Heart left ventricle (tissue), 16 donors: ENCODE measurements at regions of chr4 and their contacts with region 1.

Region 1: DNA sequence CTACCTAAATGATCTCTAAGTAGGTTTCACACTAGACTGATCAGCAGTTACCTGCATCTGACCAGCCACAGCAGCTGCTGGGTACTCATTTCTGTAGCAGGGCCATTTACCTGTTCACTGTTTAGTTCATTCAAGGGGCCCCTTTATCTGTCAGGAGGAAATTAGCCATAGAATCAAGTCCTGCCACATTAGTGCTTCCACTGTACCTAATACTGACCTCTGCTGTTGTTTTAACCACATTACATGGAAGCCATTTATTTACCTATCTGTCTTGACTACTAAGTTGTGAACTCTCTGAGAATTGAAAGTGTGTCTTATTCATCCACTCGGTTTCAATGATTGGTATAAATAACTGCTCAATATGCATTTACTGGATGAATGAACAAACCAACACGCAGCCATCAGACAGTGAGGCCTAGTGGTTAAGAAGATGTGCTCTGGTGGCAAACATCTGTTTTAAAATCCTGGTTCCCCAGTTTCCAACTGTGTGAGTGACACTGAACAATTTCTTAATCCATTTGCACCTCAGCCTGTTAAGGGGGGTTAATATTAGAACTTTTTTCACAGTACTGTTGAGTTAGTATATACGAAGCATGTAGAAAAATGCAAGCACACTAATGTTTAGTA is 30.0 kb upstream of the ANXA5 start:
- DNase-seq: no peak
- ATAC-seq: peak in 3 of 4 donors; percentile 74 to 86 (median 75)
- H3K4me3 ChIP-seq: no peak overlapping the region
- H3K27ac ChIP-seq: no peak overlapping the region
- H3K4me1 ChIP-seq: peaks cover 0 to 3% (median 0%) of the 10 kb centered on the region in 12 donors
- H3K27me3 ChIP-seq: no peaks in the 10 kb centered on the region
- CTCF ChIP-seq: peak; percentile 60 to 79 (median 71)
- POLR2A ChIP-seq: no peak

Region 2: GRCh38 chr4:121192480-121192879 is 534.3 kb before region 1 on chr4:
- intact Hi-C with region 1: loop called in 2 of 10 experiments (anchors 10 kb)
- DNase-seq: no peak
- ATAC-seq: no peak
- H3K4me3 ChIP-seq: peak overlapping the region in 3 of 12 donors; percentile 11 to 17 (median 15)
- H3K27ac ChIP-seq: no peak overlapping the region
- H3K4me1 ChIP-seq: peaks cover 0 to 20% (median 0%) of the 10 kb centered on the region in 12 donors
- H3K27me3 ChIP-seq: peaks cover 0 to 5% (median 0%) of the 10 kb centered on the region in 9 donors
- CTCF ChIP-seq: peak; percentile 54 to 81 (median 72)
- POLR2A ChIP-seq: no peak

Region 3: DNA sequence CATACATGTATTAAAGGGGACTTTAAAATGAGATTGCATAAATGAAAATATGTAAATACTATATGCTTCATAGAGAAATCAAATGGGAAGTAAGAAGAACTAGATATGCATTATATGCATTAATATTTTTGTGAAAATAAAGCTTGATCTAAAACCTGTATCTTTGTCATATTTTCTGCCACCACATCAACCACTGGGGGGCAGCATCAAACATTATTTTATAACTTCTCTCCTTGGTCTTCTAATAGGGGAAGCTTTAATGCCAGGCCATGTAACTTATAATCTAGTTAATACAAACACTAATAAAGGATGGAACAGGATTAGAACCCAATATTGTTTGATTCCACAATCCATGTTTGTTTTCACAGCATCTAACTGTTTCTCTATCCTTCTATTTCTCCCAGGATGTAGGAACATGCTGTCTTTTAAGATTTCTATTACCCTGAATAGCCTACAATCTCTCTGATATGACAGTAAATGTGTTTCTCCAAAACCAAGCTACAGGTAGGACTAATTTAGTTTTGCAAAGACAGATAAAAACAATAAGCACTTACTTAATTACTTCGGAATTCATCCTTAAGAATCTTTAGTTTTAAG is 355.9 kb before region 1 on chr4:
- intact Hi-C with region 1: loop called in 7 of 10 experiments (anchors 5 to 10 kb)
- DNase-seq: peak in 3 of 5 donors; percentile 24 to 45 (median 30)
- ATAC-seq: peak in 2 of 4 donors; percentile 54 to 69
- H3K4me3 ChIP-seq: no peak overlapping the region
- H3K27ac ChIP-seq: no peak overlapping the region
- H3K4me1 ChIP-seq: peaks cover 0 to 11% (median 0%) of the 10 kb centered on the region in 12 donors
- H3K27me3 ChIP-seq: no peaks in the 10 kb centered on the region
- CTCF ChIP-seq: peak; percentile 46 to 77 (median 64)
- POLR2A ChIP-seq: no peak

Region 4: DNA sequence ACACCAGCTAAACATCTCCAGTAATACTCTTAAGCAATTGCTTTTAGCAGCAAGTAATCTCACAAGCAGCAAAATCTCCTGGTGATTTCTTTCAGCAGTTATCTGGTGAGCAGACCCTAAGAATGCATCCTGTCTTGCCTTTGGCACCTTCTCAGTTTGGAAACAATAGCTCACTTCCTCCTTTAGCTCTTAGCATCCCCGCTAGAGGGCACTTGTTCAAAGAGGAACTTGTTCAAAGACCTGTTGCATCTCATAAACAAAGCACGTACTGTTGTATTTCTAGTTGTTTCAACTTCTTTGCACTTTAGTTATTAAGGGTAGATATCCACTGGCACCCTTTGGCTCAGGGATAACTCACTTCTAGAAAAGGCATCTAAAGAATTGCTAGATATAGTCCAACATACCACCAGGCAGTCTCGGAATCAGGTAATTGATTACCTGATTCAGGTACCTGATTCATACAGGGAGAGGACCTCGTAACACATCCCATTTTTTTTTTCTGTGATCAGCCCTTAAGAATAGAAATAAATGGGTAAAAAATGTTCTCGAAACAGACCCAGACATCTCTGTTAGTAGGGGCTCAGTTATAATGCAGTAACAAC is 264.0 kb before region 1 on chr4:
- intact Hi-C with region 1: loop called in 3 of 10 experiments (anchors 5 to 10 kb)
- DNase-seq: peak in 4 of 5 donors; percentile 30 to 58 (median 38)
- ATAC-seq: peak; percentile 42 to 82 (median 74)
- H3K4me3 ChIP-seq: no peak overlapping the region
- H3K27ac ChIP-seq: no peak overlapping the region
- H3K4me1 ChIP-seq: peaks cover 0 to 6% (median 0%) of the 10 kb centered on the region in 12 donors
- H3K27me3 ChIP-seq: no peaks in the 10 kb centered on the region
- CTCF ChIP-seq: peak; percentile 51 to 79 (median 68)
- POLR2A ChIP-seq: no peak

Region 5: GRCh38 chr4:121484633-121485032 is 242.1 kb before region 1 on chr4:
- intact Hi-C with region 1: loop called in 4 of 10 experiments (anchors 10 kb)
- DNase-seq: peak in 2 of 5 donors; percentile 24 to 36
- ATAC-seq: peak in 3 of 4 donors; percentile 82 to 87 (median 84)
- H3K4me3 ChIP-seq: no peak overlapping the region
- H3K27ac ChIP-seq: no peak overlapping the region
- H3K4me1 ChIP-seq: no peaks in the 10 kb centered on the region
- H3K27me3 ChIP-seq: no peaks in the 10 kb centered on the region
- CTCF ChIP-seq: peak; percentile 52 to 74 (median 67)
- POLR2A ChIP-seq: no peak

Region 6: DNA sequence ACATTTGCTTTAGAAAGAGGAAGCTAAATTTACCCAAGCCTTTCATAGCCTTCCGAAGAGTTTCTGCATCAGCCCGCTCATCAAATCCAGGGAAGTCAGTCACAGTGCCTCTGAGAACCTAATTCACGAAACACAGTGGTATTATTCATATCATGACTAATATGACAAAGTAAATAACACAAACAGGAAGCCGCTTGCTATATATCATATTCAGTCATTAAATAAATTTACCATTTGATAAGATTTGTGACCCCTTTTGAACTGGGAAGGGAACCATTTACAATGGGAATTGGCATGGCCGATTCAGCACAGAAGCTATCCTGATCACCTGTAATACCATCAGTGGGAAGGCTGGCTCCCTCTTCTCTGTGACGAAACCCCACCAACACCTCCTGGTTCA is 40.5 kb before region 1 on chr4:
- intact Hi-C with region 1: loop called in 2 of 10 experiments (anchors 5 kb)
- DNase-seq: no peak
- ATAC-seq: no peak
- H3K4me3 ChIP-seq: no peak overlapping the region
- H3K27ac ChIP-seq: no peak overlapping the region
- H3K4me1 ChIP-seq: peaks cover 3 to 46% (median 31%) of the 10 kb centered on the region in 12 donors
- H3K27me3 ChIP-seq: no peaks in the 10 kb centered on the region
- CTCF ChIP-seq: no peak
- POLR2A ChIP-seq: no peak

Region 7: DNA sequence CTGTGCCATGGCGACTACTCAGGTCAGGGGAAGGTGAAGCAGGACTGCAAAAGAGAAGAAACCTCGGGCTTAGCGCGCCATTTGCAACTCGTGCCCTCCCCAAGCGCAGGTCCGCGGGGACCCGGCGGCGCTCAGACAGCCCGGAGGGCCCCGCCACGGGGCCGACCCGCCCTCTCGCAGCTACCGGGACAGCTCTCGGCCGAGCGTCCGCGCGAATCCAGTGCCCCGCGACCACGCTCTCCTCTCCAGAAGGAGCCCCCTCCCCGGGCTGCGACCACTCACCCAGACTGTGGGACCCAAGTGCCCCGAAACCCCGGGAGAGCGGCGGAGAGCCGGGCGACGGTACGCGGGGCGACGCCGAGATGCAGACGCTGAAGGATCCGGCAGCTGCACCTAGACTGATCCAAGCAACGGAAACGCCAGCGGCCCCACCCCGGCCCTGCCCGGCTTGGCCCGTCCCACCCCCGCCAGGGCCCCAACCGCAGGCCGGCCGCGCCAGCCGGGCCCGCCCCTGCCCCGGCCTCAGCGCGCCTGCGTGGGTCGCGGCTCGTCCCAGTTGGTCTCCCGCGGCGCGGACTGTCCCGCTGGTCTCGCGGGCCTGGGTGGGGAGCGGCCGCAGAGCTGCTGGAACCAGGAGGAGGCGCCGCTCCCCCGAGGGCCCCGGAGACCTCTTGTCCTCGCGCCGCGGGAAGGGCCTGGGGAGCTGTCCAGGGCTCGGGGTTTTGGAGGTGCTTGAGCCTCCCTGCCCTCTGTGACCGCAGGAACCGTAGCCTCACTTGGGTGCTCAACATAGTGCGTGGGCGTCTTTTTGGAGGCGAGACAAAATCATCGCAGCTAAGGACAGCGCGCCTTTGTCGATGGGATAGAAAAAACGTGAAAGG is 29.9 kb before region 1 on chr4 and contains the start of gene ANXA5:
- intact Hi-C with region 1: loop called in 3 of 10 experiments (anchors 2 kb)
- DNase-seq: peak; percentile 90 to 96 (median 94)
- ATAC-seq: peak; percentile 91 to 99 (median 96)
- H3K4me3 ChIP-seq: peak within 1 kb of the TSS; percentile 80 to 99 (median 96)
- H3K27ac ChIP-seq: peak within 1 kb of the TSS; percentile 89 to 99 (median 98)
- H3K4me1 ChIP-seq: peaks cover 0 to 54% (median 32%) of the 10 kb centered on the region in 12 donors
- H3K27me3 ChIP-seq: no peaks in the 10 kb centered on the region
- CTCF ChIP-seq: peak in 11 of 12 donors; percentile 12 to 63 (median 44)
- POLR2A ChIP-seq: peak; percentile 12 to 71
- total RNA-seq, gene ANXA5: 108 to 283 (median 168) TPM

Region 8: GRCh38 chr4:121789960-121790829 is 63.4 kb after region 1 on chr4:
- intact Hi-C with region 1: no loop called
- DNase-seq: no peak
- ATAC-seq: no peak
- H3K4me3 ChIP-seq: no peak overlapping the region
- H3K27ac ChIP-seq: no peak overlapping the region
- H3K4me1 ChIP-seq: peaks cover 0 to 7% (median 0%) of the 10 kb centered on the region in 12 donors
- H3K27me3 ChIP-seq: peaks cover 0 to 35% (median 0%) of the 10 kb centered on the region in 9 donors
- CTCF ChIP-seq: no peak
- POLR2A ChIP-seq: no peak